ENCODE measurements at regions of chr3 and their contacts with region 1.

Region 1: DNA sequence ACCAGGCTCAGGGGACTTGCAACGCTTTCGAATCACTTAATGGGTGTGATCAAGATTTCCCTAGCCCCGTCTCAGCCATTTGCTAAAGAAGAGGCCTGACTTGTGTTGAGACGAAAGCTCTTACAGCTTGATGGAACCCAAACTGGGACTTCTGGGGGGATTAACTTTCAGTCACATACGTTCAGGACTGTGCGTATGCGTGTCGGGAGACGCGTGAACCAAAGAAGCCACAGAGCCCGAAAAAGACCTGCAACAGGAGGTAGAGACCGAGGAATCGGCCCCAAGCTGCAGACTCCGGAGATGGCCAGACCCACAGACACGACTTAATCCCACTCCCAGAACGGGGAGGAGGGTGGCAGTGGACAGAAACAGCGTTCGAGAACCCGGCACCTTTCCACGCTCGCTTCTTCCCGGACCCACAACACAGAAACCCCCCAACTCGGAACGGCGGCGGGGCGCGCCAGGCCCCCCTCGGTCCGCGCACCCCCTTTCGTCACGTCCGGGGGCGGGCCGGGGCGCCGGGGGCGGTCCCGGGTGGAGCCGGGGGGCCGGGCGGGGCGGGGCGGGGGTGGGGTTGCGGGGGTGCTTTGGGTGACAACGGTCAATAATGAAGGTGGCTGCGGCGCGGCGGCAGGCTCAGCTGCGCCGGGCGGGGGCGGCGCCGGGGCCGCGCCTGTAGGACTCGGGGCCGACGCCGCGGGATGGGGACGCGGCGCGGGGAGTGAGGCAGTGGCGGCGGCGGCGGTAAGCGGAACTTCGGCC is at the start of gene ATP11B:
- DNase-seq: peak; percentile 85
- ATAC-seq: peak; percentile 43
- H3K4me3 Mint-ChIP-seq: peak within 1 kb of the TSS; percentile 96
- H3K27ac Mint-ChIP-seq: peak within 1 kb of the TSS; percentile 99
- H3K4me1 Mint-ChIP-seq: peaks cover 27% of the 10 kb centered on the region
- H3K27me3 Mint-ChIP-seq: no peaks in the 10 kb centered on the region
- total RNA-seq, gene ATP11B: 64.6 to 86.7 TPM

Region 2: DNA sequence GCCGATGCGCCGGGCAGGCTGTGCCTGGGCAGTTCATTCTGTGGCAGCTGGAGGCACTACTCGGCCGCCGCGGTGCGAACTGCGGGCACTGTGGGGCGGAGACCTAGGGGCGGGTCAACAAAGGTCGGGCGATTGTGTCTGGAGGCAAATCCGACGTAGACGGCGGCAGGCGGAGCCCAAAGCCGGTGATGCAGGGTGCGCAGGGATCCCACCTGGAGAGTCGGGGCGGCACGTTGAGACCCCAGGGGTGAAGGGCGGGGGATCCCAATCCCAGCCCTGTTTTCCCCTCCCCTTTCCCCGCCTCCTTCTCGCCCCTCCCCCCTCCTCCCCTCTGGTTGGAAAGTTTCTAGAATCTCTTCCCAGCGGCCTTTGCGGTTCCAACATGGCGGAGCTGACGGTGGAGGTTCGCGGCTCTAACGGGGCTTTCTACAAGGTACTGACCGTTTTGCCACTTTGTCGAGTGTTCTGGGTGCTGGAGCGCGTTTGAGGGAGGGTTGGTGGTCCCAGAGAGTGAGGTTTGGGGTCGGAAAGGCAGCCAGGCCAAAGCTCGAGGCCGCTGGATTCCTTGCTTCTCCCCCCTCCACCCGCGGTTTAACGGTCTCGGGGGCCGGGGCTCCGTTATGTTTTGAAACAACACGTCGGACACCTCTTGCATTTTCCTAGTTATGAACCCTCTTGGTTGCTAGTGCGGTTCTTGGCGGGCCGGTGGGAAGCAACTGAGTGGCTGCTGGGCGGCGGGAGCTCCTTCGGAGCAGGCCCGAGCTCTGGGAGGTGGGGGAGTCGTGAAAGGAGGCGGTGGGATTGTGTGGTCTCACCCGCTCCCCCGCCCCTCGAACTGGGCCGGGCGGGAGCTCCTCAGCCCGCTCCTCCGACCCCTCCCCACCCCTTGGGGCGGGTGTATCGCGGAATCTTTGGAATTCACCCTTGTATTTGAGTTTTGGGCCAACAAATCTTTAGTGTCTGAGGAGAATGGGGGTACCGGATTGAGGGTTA is 1880.5 kb before region 1 on chr3 and contains the start of gene FXR1:
- CTCF ChIA-PET with region 1: no interaction called
- POLR2A ChIA-PET with region 1: no interaction called
- intact Hi-C with region 1: loop called in 1 of 2 experiments (anchors 10 kb)
- DNase-seq: peak; percentile 96
- ATAC-seq: peak; percentile 97
- H3K4me3 Mint-ChIP-seq: peak within 1 kb of the TSS; percentile 98
- H3K27ac Mint-ChIP-seq: peak within 1 kb of the TSS; percentile 98
- H3K4me1 Mint-ChIP-seq: peaks cover 48% of the 10 kb centered on the region
- H3K27me3 Mint-ChIP-seq: no peaks in the 10 kb centered on the region
- total RNA-seq, gene FXR1: 175 to 186 TPM

Region 3: DNA sequence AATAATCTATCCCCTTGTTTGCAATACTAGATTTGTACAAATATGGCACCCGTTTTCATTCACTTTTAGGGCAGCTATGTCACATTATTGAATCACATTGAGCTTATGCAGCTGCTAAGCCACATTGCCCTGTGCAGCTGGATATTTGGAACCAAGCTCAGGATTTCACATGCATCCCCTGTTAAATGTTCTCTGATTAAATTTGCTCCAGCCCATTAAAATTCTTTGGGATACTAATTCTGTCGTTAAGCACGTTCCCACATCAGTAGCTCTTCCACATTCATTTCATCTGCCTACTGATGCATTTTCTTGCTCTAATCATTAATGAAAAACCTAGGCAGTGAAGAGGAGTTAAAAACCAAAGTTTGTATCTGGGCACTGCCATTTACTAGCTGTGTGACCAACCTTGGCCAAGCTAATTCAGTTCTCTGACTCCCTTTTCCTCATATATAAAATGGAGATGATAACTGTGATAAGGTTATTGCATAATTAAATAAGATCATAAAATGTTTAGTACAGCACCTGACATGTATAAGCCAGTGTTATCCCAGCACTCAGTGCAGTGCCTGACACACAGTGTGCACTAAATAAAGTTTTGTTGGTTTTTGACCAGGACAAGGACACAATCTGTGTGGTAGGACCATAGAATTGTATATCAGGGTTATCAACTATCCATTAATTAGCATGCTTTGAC is 222.0 kb before region 1 on chr3:
- CTCF ChIA-PET with region 1: no interaction called
- POLR2A ChIA-PET with region 1: no interaction called
- intact Hi-C with region 1: no loop called
- DNase-seq: no peak
- ATAC-seq: no peak
- H3K4me3 Mint-ChIP-seq: no peak overlapping the region
- H3K27ac Mint-ChIP-seq: no peak overlapping the region
- H3K4me1 Mint-ChIP-seq: peaks cover 3% of the 10 kb centered on the region
- H3K27me3 Mint-ChIP-seq: no peaks in the 10 kb centered on the region

Region 4: GRCh38 chr3:182704926-182705325 is 88.2 kb before region 1 on chr3:
- CTCF ChIA-PET with region 1: no interaction called
- POLR2A ChIA-PET with region 1: no interaction called
- intact Hi-C with region 1: no loop called
- DNase-seq: no peak
- ATAC-seq: no peak
- H3K4me3 Mint-ChIP-seq: no peak overlapping the region
- H3K27ac Mint-ChIP-seq: no peak overlapping the region
- H3K4me1 Mint-ChIP-seq: no peaks in the 10 kb centered on the region
- H3K27me3 Mint-ChIP-seq: peaks cover 8% of the 10 kb centered on the region

Region 5: DNA sequence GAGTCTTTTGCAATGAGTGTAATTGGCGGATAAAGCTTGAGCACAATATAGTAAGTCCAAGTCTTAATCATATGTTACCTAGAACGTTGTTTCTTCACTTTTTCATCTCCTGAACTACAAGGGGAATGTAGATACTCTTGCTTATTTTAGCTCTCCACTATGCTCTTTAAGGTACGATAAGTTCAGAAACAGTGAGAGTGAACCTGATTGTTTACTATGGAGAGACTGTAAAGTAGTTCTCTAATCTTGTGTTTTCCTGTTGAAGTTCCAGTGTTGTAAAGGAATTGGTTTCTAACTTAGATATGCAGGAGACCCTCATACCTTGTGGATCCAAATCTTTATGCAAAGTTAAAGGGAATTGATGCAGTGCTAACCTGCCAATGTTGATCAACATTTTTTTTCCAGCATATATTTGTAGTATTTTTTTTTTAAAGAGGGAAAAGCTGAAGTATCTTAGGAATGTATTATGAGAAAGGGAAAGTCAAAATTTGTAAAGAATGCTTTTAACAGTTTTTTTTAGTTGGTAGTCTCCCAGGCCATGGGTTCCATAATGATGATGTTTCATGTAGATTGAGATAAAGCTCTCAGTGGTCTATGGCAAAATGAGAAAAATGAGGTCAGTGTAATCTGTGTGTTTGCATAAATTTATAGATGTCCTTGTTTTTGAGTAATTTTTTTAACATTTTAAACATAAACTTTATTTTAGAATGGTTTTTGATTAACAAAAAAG is 15.1 kb after region 1 on chr3:
- CTCF ChIA-PET with region 1: interaction called, 4 read pairs
- POLR2A ChIA-PET with region 1: no interaction called
- intact Hi-C with region 1: loop called in 1 of 2 experiments (anchors 1 kb)
- DNase-seq: no peak
- ATAC-seq: no peak
- H3K4me3 Mint-ChIP-seq: no peak overlapping the region
- H3K27ac Mint-ChIP-seq: no peak overlapping the region
- H3K4me1 Mint-ChIP-seq: peaks cover 64% of the 10 kb centered on the region
- H3K27me3 Mint-ChIP-seq: no peaks in the 10 kb centered on the region

Region 6: DNA sequence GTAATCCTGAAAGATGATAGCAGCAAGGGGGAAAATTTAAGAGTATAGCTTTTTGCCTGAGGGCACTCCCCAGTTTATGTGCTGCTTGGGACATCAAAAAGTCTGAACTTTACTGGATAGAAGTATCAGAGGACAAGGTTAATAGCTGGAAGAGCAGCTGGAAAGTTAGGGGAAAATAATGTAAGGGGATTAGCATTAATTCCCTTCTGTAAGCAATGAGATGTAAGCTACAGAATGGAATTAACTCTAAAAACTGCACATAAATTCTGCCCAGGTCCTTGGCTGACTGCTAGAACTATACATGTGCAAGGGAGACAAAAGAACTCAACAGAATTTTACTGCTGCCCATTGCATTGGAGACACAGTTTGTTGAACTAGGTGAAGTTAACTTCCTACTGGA is 55.8 kb after region 1 on chr3:
- CTCF ChIA-PET with region 1: no interaction called
- POLR2A ChIA-PET with region 1: no interaction called
- intact Hi-C with region 1: no loop called
- DNase-seq: no peak
- ATAC-seq: no peak
- H3K4me3 Mint-ChIP-seq: no peak overlapping the region
- H3K27ac Mint-ChIP-seq: no peak overlapping the region
- H3K4me1 Mint-ChIP-seq: no peaks in the 10 kb centered on the region
- H3K27me3 Mint-ChIP-seq: no peaks in the 10 kb centered on the region

Region 7: GRCh38 chr3:182967218-182968204 is 174.4 kb after region 1 on chr3:
- CTCF ChIA-PET with region 1: no interaction called
- POLR2A ChIA-PET with region 1: no interaction called
- intact Hi-C with region 1: loop called in 1 of 2 experiments (anchors 5 kb)
- DNase-seq: no peak
- ATAC-seq: peak; percentile 69
- H3K4me3 Mint-ChIP-seq: peak overlapping the region; percentile 32
- H3K27ac Mint-ChIP-seq: peak overlapping the region; percentile 92
- H3K4me1 Mint-ChIP-seq: peaks cover 62% of the 10 kb centered on the region
- H3K27me3 Mint-ChIP-seq: no peaks in the 10 kb centered on the region

Region 8: GRCh38 chr3:183099026-183099837 is 306.1 kb after region 1 on chr3 and contains the start of gene MCCC1:
- CTCF ChIA-PET with region 1: no interaction called
- POLR2A ChIA-PET with region 1: no interaction called
- intact Hi-C with region 1: loop called (anchors 1 to 5 kb)
- DNase-seq: peak; percentile 99
- ATAC-seq: peak; percentile 99
- H3K4me3 Mint-ChIP-seq: peak within 1 kb of the TSS; percentile 91
- H3K27ac Mint-ChIP-seq: peak within 1 kb of the TSS; percentile 99
- H3K4me1 Mint-ChIP-seq: peaks cover 33% of the 10 kb centered on the region
- H3K27me3 Mint-ChIP-seq: no peaks in the 10 kb centered on the region
- total RNA-seq, gene MCCC1: 22.0 to 31.1 TPM

Measured in activated CD4-positive, alpha-beta T cell treated with anti-CD3 and anti-CD28 coated beads for 36 hours (primary cell).